Kidney (tissue), 22 donors: ENCODE measurements at regions of chr12 and their contacts with region 1.

Region 1: DNA sequence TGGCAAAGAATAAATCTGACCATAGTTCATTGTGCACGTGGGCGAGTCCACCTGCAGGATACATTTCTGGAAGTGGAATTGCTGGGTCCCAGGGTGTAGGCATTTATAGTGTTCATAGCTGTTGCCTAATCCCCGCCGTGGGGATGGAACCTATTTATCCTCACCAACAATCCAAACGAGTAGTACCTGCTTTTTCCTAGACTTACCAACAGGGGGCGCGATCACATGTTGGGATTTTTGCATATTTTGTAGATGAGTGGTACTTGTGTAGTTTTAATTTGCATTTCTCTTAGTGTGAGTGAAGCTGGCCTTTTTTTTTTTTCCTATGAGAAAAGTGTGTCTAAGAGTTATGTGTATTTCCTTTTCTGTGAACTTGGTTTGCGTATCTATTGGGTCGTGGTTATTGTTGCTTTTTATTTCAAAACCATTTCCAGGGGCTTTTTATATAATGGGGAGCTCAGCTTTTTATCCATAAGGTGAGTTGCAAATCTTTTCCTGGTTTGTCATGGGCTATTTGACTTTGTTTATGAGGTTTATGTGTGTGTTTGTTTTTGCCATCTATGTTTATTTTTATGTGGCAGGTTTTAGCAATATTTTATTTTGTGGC is 67.2 kb downstream of the CCDC92 start:
- DNase-seq: peak in 4 of 5 donors; percentile 23 to 76 (median 40)
- H3K4me3 ChIP-seq: no peak overlapping the region
- H3K27ac ChIP-seq: no peak overlapping the region
- H3K4me1 ChIP-seq: no peaks in the 10 kb centered on the region
- H3K27me3 ChIP-seq: no peaks in the 10 kb centered on the region
- CTCF ChIP-seq: peak; percentile 60

Region 2: GRCh38 chr12:123681605-123682004 is 223.8 kb before region 1 on chr12:
- intact Hi-C with region 1: no loop called
- DNase-seq: no peak
- H3K4me3 ChIP-seq: no peak overlapping the region
- H3K27ac ChIP-seq: no peak overlapping the region
- H3K4me1 ChIP-seq: no peaks in the 10 kb centered on the region
- H3K27me3 ChIP-seq: no peaks in the 10 kb centered on the region
- CTCF ChIP-seq: no peak

Region 3: GRCh38 chr12:123983822-123984485 is 78.5 kb after region 1 on chr12:
- intact Hi-C with region 1: loop called (anchors 10 kb)
- DNase-seq: peak in 3 of 5 donors; percentile 31 to 87 (median 75)
- H3K4me3 ChIP-seq: no peak overlapping the region
- H3K27ac ChIP-seq: no peak overlapping the region
- H3K4me1 ChIP-seq: peaks cover 0 to 8% (median 0%) of the 10 kb centered on the region in 3 donors
- H3K27me3 ChIP-seq: no peaks in the 10 kb centered on the region
- CTCF ChIP-seq: peak; percentile 64

Region 4: GRCh38 chr12:124321040-124321481 is 415.6 kb after region 1 on chr12:
- intact Hi-C with region 1: no loop called
- DNase-seq: peak in 4 of 5 donors; percentile 52 to 74 (median 62)
- H3K4me3 ChIP-seq: no peak overlapping the region
- H3K27ac ChIP-seq: no peak overlapping the region
- H3K4me1 ChIP-seq: no peaks in the 10 kb centered on the region
- H3K27me3 ChIP-seq: no peaks in the 10 kb centered on the region
- CTCF ChIP-seq: peak; percentile 88